ENCODE measurements at regions of chr10 and their contacts with region 1.

Region 1: DNA sequence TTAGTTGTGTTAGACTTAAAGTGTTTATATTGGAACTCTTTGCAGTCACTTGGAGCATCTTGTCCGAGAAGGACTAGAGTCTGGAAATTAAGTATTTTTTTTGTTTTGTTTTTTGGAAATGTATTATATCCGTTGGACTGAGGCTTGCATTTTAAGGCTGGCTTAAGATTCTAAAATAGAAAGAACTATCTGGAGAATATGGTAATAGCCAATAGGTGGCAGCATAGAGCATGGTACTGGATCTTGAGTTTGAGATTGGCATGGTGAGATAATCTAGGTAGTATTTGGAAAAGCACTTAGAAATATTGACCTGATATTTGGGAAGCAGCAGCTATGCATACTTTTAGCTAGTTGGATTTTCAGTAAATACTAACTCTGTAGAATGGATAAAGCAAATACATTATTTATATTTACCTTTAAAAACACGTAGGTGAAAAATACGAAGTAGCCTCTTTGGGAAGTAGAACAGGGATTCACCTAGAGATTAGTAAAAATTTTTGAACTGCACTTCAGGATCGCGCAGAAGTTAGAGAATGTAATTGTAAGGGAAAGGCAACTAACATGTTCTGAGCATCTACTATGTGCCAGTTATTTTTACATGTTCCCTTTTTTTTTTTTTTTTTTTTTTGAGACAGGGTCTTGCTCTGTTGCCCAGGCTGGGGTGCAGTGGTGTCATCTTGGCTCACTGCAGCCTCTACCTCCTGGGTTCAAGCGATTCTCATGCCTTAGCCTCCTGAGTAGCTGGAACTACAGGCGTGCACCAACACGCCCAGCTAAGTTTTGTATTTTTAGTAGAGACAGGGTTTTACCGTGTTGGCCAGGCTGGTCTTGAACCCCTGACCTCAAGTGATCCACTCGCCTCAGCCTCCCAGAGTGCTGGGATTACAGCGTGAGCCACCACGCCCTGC is 78.6 kb downstream of the LCOR start:
- DNase-seq: no peak

Region 2: GRCh38 chr10:96863922-96864543 is 46.7 kb before region 1 on chr10:
- intact Hi-C with region 1: loop called in 1 of 2 experiments (anchors 10 kb)
- DNase-seq: no peak